ENCODE measurements at regions of chr7 and their contacts with region 1.

Region 1: DNA sequence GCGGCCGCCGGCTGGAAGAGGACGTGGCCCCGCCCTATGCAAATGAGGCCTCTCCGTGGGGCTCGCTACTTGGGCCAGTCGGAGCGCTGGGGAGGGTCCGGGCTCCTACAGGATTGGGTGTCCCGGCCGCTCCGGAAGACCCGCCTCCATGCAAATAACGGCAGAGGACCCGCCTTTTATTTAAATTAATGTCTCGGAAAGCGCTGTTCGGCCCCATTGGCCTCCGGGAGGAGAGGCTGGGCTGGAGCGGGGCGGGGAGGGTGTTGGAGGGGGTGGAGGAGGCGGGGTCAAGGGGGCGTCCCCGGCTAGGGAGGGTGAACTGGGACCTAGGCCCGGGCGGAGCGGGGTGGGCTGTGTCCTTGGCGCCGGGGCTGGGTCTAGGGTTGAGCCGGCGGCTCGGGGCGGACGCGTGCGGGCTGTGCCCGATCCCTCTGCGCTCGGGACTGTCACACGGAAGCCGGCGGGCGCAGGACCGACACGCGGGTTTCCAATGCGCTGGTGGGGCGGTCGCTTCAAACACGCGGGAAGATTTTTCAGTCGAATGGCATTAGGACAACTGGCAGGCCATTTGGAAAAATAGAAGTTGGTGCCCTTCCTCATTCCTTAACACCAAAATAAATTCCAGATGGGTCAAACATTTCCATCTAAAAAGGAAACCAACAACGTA is 344 bp upstream of the POLM start:
- DNase-seq: peak; percentile 98 to 99
- ATAC-seq: peak; percentile 94 to 98 (median 96)
- H3K4me3 ChIP-seq: peak overlapping the region; percentile 65 to 92 (median 84)
- H3K27ac ChIP-seq: peak overlapping the region; percentile 73 to 96 (median 93)
- H3K4me1 ChIP-seq: peaks cover 9 to 56% (median 28%) of the 10 kb centered on the region in 9 donors
- H3K27me3 ChIP-seq: no peaks in the 10 kb centered on the region
- CTCF ChIP-seq: no peak

Region 2: DNA sequence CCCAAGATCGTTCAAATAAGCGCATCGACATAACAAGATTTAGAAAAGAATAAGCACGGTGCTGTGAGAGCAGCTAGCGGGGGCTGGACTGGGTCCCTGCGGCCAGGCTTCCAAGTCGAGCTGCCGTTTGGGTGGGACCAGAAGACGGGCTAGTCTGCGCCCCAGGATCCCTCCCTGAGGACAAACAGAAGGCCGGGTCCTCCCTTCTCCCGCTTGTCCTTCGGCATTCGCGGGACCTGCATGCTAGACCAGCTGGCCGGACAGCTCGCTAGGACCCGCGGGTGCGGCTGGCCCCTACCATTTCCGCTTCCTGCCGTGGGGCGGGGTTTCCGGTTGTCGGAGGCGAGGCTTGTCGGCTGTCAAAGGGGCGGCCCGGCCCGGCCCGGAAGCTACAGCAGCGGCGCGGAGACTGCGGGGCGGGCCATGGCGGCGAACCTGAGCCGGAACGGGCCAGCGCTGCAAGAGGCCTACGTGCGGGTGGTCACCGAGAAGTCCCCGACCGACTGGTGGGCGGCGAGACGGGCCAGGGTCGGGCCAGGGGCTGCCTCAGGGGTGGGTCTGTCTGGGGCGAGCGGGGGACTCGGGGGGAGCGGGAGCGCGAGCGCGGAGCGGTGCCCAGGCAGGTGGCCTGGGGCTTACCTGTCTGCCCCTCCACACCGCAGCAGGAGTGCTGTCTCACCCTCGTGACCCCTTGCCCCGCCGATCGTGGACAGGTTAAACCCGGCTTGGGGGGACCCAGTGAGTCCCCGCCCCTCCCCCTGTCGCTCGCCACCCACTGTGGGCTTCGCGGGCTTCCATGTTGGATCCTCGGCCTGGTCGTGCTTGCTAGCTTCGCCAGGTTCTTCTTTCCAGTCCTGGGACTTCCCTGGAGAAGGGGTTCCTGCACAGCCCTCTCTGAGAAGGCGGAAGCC is 38.1 kb before region 1 on chr7 and contains the start of gene DBNL:
- intact Hi-C with region 1: loop called in 1 of 10 experiments (anchors 5 kb)
- DNase-seq: peak; percentile 96 to 97
- ATAC-seq: peak; percentile 90 to 96 (median 95)
- H3K4me3 ChIP-seq: peak within 1 kb of the TSS; percentile 75 to 99 (median 91)
- H3K27ac ChIP-seq: peak within 1 kb of the TSS; percentile 76 to 99 (median 93)
- H3K4me1 ChIP-seq: peaks cover 6 to 57% (median 36%) of the 10 kb centered on the region in 9 donors
- H3K27me3 ChIP-seq: no peaks in the 10 kb centered on the region
- CTCF ChIP-seq: no peak
- total RNA-seq, gene DBNL: 26.0 to 59.0 (median 35.4) TPM

Region 3: DNA sequence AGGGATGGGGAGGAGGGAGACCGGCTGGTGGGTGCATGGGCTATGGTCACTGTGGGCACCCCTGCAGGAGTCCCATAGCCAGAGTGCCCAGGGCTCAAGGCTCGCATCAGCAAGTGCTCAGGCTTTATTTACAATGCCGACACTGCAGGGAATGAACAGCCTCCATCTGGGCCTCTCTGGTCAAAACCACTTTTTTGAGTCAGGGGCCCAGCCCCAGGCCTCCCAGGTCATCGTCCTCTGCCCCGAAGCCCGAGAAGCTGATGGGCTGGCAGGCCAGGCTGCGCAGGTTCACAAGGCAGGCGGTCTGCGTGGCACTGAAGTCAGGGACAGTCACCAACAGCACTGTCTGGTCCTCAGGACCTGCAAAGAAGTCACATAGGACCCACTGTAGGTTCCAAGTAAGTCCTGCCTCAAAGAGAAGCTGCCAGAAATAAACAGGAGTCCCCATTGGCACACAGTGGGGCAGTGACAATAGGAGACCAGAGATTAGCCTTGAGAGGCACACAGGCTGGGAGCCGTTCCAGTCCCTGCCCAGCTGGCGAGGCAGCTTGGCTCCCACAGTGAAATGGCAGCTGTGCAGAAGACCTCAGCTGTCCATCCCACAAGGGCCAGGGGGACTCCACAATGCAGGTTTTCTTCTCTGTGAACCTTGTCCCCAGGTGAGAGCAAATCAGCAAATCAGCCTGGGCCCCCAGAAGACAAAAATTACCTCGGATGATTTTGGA is 32.1 kb after region 1 on chr7:
- intact Hi-C with region 1: loop called in 1 of 10 experiments (anchors 5 kb)
- DNase-seq: peak; percentile 69 to 79
- ATAC-seq: peak; percentile 46 to 92 (median 80)
- H3K4me3 ChIP-seq: no peak overlapping the region
- H3K27ac ChIP-seq: peak overlapping the region in 6 of 10 donors; percentile 19 to 76 (median 48)
- H3K4me1 ChIP-seq: peaks cover 3 to 37% (median 11%) of the 10 kb centered on the region in 9 donors
- H3K27me3 ChIP-seq: no peaks in the 10 kb centered on the region
- CTCF ChIP-seq: no peak

Region 4: GRCh38 chr7:44123190-44124003 is 40.7 kb after region 1 on chr7 and contains the start of gene POLD2:
- intact Hi-C with region 1: loop called in 8 of 10 experiments (anchors 1 to 5 kb)
- DNase-seq: peak; percentile 99
- ATAC-seq: peak; percentile 98 to 99 (median 99)
- H3K4me3 ChIP-seq: peak within 1 kb of the TSS; percentile 33 to 90 (median 74)
- H3K27ac ChIP-seq: peak within 1 kb of the TSS; percentile 0 to 94 (median 88)
- H3K4me1 ChIP-seq: peaks cover 0 to 51% (median 18%) of the 10 kb centered on the region in 9 donors
- H3K27me3 ChIP-seq: no peaks in the 10 kb centered on the region
- CTCF ChIP-seq: peak in 1 of 9 donors; percentile 15
- total RNA-seq, gene POLD2: 64.4 to 92.0 (median 76.8) TPM

Region 5: DNA sequence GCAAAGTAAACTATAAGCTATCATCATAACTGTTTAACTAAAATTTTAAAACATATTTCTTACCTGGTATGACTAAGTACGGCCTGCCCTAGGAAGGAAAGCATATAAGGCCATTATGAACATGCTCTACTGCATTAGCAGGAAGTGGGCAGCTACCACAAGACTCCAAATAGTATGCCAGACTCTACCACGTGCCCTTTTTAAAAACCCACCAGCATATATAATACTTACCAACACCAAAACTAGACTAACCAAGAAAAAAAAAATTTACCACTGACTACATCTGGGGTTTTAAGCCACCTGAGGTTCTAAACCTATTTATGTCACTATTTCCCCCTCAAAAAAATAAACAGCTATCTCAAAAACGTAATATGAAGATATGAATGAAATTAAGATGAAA is 377.7 kb after region 1 on chr7:
- intact Hi-C with region 1: no loop called
- DNase-seq: no peak
- ATAC-seq: no peak
- H3K4me3 ChIP-seq: no peak overlapping the region
- H3K27ac ChIP-seq: no peak overlapping the region
- H3K4me1 ChIP-seq: peaks cover 5 to 47% (median 31%) of the 10 kb centered on the region in 9 donors
- H3K27me3 ChIP-seq: no peaks in the 10 kb centered on the region
- CTCF ChIP-seq: no peak

Measured in heart right ventricle (tissue), 16 donors.